CD4-positive, alpha-beta T cell (primary cell): ENCODE measurements at regions of chr7 and their contacts with region 1.

Region 1: DNA sequence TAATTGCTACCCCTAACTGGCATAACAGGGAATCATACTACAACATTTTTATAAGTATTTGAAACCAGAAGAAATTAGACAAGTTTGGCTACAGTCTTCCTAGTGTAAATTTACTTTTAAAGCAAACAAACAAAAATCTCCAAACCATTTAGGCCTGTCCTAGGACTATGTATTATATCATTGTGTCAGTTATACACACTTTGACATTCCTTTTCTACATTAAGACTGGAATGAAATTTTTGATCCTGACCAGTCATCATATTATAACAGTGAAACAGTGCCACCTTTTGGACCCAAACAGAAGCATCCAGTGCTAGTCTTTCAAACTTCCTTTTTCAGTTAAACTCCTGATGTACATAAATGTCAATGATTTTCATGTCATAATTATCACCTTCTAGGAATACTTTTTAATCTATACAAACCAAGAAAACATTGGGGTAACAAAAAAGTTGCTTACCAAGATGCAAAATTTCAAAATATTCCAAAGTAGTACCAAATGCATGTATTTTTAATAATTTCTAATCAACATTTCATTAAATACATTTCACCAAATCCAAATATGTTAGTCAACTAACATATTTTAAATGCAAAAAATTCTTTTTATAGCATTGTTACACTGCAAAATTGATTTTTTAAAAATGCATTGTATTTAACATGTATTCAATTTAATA is 75.7 kb downstream of the IMMP2L start:
- DNase-seq: peak in 4 of 14 experiments; percentile 10 to 56 (median 46)
- ATAC-seq: no peak
- H3K4me3 ChIP-seq: no peak overlapping the region
- H3K4me3 Mint-ChIP-seq: no peak overlapping the region
- H3K27ac ChIP-seq: no peak overlapping the region
- H3K27ac Mint-ChIP-seq: no peak overlapping the region
- H3K4me1 ChIP-seq: no peaks in the 10 kb centered on the region
- H3K4me1 Mint-ChIP-seq: no peaks in the 10 kb centered on the region
- H3K27me3 ChIP-seq: no peaks in the 10 kb centered on the region
- H3K27me3 Mint-ChIP-seq: no peaks in the 10 kb centered on the region
- CTCF ChIP-seq: peak; percentile 76

Region 2: DNA sequence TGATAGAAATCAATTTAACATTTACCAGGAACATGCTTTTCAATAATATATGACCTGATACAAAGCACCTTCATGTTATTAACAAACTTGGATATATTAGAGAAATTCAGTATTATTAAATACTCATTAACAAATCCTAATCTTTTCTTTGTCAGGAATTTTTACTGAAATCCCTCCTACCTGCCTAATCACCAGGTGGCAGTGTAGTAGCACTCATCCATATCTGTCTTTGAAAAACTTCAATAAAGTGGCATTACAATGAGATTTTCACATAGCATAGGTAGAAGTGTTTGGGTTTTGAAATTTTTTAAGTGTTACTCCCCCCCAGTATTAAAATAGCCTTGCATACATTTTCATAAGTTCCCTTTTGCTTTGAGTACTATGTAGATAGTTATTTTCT is 1642.2 kb before region 1 on chr7:
- CTCF ChIA-PET with region 1: no interaction called
- POLR2A ChIA-PET with region 1: no interaction called
- intact Hi-C with region 1: loop called in 1 of 2 experiments (anchors 2 kb)
- DNase-seq: peak in 3 of 14 experiments; percentile 5 to 29 (median 21)
- ATAC-seq: no peak
- H3K4me3 ChIP-seq: no peak overlapping the region
- H3K4me3 Mint-ChIP-seq: no peak overlapping the region
- H3K27ac ChIP-seq: no peak overlapping the region
- H3K27ac Mint-ChIP-seq: no peak overlapping the region
- H3K4me1 ChIP-seq: no peaks in the 10 kb centered on the region
- H3K4me1 Mint-ChIP-seq: no peaks in the 10 kb centered on the region
- H3K27me3 ChIP-seq: no peaks in the 10 kb centered on the region
- H3K27me3 Mint-ChIP-seq: no peaks in the 10 kb centered on the region
- CTCF ChIP-seq: peak; percentile 44

Region 3: DNA sequence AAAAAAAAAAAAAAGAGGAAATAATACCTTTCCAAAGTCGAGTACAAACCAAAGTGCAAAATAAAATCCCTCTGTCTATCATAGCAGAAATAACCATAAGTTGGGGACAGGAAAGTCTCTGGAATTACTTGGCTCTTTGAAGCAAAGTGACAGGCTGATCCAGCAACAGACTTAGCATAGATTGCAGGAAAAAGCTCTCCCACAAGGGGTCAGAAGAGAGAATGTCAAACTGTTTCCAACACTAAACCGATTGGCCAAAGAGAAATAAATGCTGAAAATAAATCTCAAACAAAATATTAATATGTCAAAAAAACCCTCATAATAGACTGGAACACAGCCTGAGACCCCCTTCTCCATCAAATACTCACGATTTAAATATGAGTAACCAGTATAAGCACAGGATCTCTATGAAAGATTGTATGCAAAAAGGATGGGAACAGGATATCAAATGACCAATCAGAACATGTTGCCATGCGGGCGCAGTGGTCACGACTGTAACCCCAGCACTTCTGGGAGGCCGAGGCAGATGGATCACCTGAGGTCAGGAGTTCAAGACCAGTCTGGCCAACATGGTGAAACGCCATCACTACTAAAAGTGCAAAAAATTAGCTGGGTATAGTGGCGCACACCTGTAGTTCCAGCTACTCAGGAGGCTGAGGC is 1396.4 kb before region 1 on chr7:
- CTCF ChIA-PET with region 1: no interaction called
- POLR2A ChIA-PET with region 1: no interaction called
- intact Hi-C with region 1: loop called in 1 of 2 experiments (anchors 10 kb)
- DNase-seq: peak in 4 of 14 experiments; percentile 10 to 29 (median 20)
- ATAC-seq: no peak
- H3K4me3 ChIP-seq: no peak overlapping the region
- H3K4me3 Mint-ChIP-seq: no peak overlapping the region
- H3K27ac ChIP-seq: no peak overlapping the region
- H3K27ac Mint-ChIP-seq: no peak overlapping the region
- H3K4me1 ChIP-seq: no peaks in the 10 kb centered on the region
- H3K4me1 Mint-ChIP-seq: no peaks in the 10 kb centered on the region
- H3K27me3 ChIP-seq: no peaks in the 10 kb centered on the region
- H3K27me3 Mint-ChIP-seq: peaks cover 6% of the 10 kb centered on the region
- CTCF ChIP-seq: peak; percentile 36

Region 4: GRCh38 chr7:110595690-110596325 is 890.8 kb before region 1 on chr7:
- CTCF ChIA-PET with region 1: no interaction called
- POLR2A ChIA-PET with region 1: no interaction called
- intact Hi-C with region 1: loop called in 1 of 2 experiments (anchors 5 kb)
- DNase-seq: peak in 2 of 14 experiments; percentile 17 to 19
- ATAC-seq: no peak
- H3K4me3 ChIP-seq: no peak overlapping the region
- H3K4me3 Mint-ChIP-seq: no peak overlapping the region
- H3K27ac ChIP-seq: no peak overlapping the region
- H3K27ac Mint-ChIP-seq: no peak overlapping the region
- H3K4me1 ChIP-seq: no peaks in the 10 kb centered on the region
- H3K4me1 Mint-ChIP-seq: no peaks in the 10 kb centered on the region
- H3K27me3 ChIP-seq: no peaks in the 10 kb centered on the region
- H3K27me3 Mint-ChIP-seq: no peaks in the 10 kb centered on the region
- CTCF ChIP-seq: no peak

Region 5: DNA sequence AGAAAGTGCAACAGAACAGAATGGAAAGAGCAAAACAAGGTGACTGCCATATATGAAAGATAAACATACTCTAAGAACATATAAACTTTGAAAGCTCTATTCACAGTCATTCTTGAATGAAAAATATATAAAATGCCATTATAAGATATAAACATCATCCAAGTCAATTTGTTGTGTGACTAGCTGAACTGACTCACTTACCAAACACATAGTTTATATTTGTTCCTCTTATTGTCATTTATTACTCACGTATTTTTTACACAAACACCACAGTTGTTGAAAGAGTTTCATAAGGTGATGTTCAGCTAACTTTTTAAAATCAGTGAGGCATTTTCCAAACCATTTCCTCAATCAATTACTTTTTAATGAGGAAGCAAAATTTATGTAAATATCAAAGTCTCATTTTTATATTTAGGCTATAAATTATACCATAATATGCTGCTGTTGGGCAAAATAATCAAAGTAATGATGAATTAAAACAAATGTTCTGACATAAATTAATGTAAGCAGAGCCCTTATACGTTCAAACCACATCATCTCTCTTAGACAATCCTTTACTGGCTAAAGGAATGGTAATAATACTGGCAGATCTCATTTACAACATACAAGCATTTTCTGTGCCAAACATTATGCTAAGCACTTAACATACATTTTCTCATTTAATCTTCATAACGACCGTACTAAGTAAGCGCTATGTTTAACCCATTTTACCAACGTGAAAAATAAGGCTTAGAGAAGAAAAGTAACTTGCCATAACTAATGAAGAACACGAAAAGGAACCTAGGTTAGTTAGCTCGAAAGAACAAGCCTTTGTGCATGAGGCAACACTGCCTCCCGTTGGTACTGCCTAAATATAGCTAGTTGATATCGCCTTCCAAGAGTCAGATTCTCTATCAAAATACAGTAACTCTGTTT is 388.3 kb before region 1 on chr7:
- CTCF ChIA-PET with region 1: no interaction called
- POLR2A ChIA-PET with region 1: no interaction called
- intact Hi-C with region 1: loop called (anchors 5 to 10 kb)
- DNase-seq: peak; percentile 27 to 82 (median 53)
- ATAC-seq: peak; percentile 95
- H3K4me3 ChIP-seq: no peak overlapping the region
- H3K4me3 Mint-ChIP-seq: peak overlapping the region; percentile 75
- H3K27ac ChIP-seq: no peak overlapping the region
- H3K27ac Mint-ChIP-seq: peak overlapping the region; percentile 82
- H3K4me1 ChIP-seq: no peaks in the 10 kb centered on the region
- H3K4me1 Mint-ChIP-seq: peaks cover 73% of the 10 kb centered on the region
- H3K27me3 ChIP-seq: no peaks in the 10 kb centered on the region
- H3K27me3 Mint-ChIP-seq: no peaks in the 10 kb centered on the region
- CTCF ChIP-seq: peak; percentile 82

Region 6: DNA sequence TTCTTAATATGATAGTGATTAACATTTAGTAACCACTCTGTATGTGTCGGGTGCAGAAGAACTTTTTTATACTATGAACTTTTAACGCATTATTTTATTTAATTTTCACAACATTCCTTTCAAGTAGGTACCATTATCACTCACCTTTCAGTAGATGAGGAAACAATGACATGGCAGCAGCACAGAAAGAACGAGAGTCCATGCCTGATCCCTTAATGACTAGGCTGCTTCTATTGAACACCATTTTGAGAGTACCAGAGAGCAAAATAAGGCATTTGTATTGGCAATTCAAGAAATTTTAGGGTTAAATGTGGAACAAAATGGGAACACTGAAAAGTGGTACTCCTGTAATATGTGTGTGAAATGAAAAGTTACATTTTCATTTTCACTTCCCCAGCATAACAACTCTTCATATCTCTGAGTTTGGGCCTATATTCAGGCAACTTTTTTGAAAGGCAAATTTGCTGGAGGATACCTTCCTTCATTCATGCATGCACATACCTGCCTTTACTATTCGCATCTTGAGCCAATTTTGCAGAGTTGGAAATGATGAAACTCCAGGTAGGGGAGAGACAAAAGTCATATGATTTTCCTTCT is 382.8 kb before region 1 on chr7:
- CTCF ChIA-PET with region 1: no interaction called
- POLR2A ChIA-PET with region 1: no interaction called
- intact Hi-C with region 1: loop called (anchors 5 to 10 kb)
- DNase-seq: no peak
- ATAC-seq: no peak
- H3K4me3 ChIP-seq: no peak overlapping the region
- H3K4me3 Mint-ChIP-seq: no peak overlapping the region
- H3K27ac ChIP-seq: no peak overlapping the region
- H3K27ac Mint-ChIP-seq: peak overlapping the region; percentile 18
- H3K4me1 ChIP-seq: no peaks in the 10 kb centered on the region
- H3K4me1 Mint-ChIP-seq: peaks cover 68% of the 10 kb centered on the region
- H3K27me3 ChIP-seq: no peaks in the 10 kb centered on the region
- H3K27me3 Mint-ChIP-seq: no peaks in the 10 kb centered on the region
- CTCF ChIP-seq: no peak

Region 7: DNA sequence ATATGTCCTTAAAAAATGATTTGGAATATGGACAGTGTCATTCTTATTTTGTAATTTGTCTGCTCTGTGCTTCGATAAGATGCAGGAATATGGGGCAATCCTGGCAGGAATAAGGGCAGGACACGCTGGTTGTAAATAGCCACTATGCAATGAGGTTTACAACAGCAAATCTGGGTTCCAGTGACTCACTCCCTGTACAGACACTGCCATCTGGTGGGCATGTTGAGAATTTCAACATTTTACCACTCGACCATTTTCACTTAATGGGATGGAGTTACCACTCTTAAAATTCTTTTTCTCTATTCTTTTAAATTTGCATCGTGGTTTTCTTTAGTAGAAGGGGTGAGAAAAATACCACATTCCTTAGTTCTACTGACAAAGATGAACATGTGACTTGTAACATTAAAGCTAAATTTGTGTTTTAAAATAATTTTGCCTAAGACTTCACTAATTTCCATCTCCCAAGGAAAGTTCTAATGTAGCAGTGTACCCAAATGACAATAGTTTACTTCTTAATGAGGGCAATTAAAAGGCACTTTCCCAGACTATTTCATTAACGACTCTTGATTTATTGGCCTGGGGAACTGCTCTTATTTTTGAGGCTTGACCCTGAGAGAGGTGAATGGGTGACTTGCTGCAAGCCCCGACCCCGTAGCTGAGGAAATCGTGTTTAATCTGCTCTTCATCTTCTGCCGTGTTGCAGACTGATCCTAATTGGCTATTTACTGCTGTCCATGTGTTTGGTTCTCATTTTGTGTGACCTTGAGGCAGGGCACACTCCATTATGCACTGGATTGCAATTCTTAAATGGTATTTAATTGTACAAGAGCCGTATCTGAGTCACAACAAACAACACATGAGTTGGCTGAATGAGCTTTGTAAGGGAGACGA is 249.3 kb after region 1 on chr7:
- CTCF ChIA-PET with region 1: no interaction called
- POLR2A ChIA-PET with region 1: no interaction called
- intact Hi-C with region 1: loop called (anchors 2 to 10 kb)
- DNase-seq: peak in 12 of 14 experiments; percentile 15 to 76 (median 41)
- ATAC-seq: peak; percentile 51
- H3K4me3 ChIP-seq: no peak overlapping the region
- H3K4me3 Mint-ChIP-seq: no peak overlapping the region
- H3K27ac ChIP-seq: no peak overlapping the region
- H3K27ac Mint-ChIP-seq: no peak overlapping the region
- H3K4me1 ChIP-seq: no peaks in the 10 kb centered on the region
- H3K4me1 Mint-ChIP-seq: no peaks in the 10 kb centered on the region
- H3K27me3 ChIP-seq: no peaks in the 10 kb centered on the region
- H3K27me3 Mint-ChIP-seq: peaks cover 14% of the 10 kb centered on the region
- CTCF ChIP-seq: peak; percentile 95

Region 8: GRCh38 chr7:112484671-112485097 is 998.1 kb after region 1 on chr7:
- CTCF ChIA-PET with region 1: no interaction called
- POLR2A ChIA-PET with region 1: no interaction called
- intact Hi-C with region 1: no loop called
- DNase-seq: no peak
- ATAC-seq: no peak
- H3K4me3 ChIP-seq: no peak overlapping the region
- H3K4me3 Mint-ChIP-seq: no peak overlapping the region
- H3K27ac ChIP-seq: no peak overlapping the region
- H3K27ac Mint-ChIP-seq: no peak overlapping the region
- H3K4me1 ChIP-seq: no peaks in the 10 kb centered on the region
- H3K4me1 Mint-ChIP-seq: peaks cover 11% of the 10 kb centered on the region
- H3K27me3 ChIP-seq: no peaks in the 10 kb centered on the region
- H3K27me3 Mint-ChIP-seq: no peaks in the 10 kb centered on the region
- CTCF ChIP-seq: no peak